Activated T-helper 2 cell treated with anti-CD3 and anti-CD28 coated beads, Interferon-gamma antibody, Interleukin-2, Interleukin-4, amounts not matched to agents 10 μg/mL and 5 μg/mL and 100 μg/mL, durations not matched to agents 14 hours and 24 hours and 36 hours (primary cell): ENCODE measurements at regions of chr10 and their contacts with region 1.

Region 1: GRCh38 chr10:26486991-26487850 is 49.1 kb downstream of the APBB1IP start:
- DNase-seq: peak; percentile 65
- H3K4me3 Mint-ChIP-seq: peak overlapping the region; percentile 76
- H3K27ac Mint-ChIP-seq: peak overlapping the region; percentile 98
- H3K4me1 Mint-ChIP-seq: peaks cover 52% of the 10 kb centered on the region
- H3K27me3 Mint-ChIP-seq: no peaks in the 10 kb centered on the region

Region 2: DNA sequence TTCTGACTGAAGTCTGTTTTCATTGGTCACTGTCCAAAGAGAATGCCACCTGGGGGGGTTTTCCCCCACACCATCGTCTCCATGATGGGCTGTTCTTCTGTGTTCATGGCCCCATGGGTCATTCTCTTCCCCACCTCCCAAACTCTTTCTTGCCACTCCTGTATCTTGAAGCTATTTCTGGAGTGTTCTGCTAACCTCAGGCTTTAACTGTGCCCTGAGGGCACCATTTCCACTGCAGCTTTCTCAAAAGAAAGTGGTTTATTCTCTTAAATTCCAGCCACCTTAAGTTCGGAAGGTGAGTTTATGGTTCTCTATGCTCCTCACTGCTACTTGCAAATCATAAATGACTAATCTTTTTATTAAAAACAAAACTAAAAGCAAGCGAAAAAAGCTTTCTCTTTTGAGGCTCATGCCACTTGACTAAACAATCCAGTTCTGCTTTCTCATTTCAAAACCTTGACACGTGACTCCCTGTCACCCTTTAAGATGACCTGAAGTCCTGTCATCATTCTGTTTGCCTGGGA is 56.5 kb before region 1 on chr10:
- intact Hi-C with region 1: loop called (anchors 1 kb)
- DNase-seq: no peak
- H3K4me3 Mint-ChIP-seq: no peak overlapping the region
- H3K27ac Mint-ChIP-seq: peak overlapping the region; percentile 86
- H3K4me1 Mint-ChIP-seq: peaks cover 15% of the 10 kb centered on the region
- H3K27me3 Mint-ChIP-seq: no peaks in the 10 kb centered on the region

Region 3: DNA sequence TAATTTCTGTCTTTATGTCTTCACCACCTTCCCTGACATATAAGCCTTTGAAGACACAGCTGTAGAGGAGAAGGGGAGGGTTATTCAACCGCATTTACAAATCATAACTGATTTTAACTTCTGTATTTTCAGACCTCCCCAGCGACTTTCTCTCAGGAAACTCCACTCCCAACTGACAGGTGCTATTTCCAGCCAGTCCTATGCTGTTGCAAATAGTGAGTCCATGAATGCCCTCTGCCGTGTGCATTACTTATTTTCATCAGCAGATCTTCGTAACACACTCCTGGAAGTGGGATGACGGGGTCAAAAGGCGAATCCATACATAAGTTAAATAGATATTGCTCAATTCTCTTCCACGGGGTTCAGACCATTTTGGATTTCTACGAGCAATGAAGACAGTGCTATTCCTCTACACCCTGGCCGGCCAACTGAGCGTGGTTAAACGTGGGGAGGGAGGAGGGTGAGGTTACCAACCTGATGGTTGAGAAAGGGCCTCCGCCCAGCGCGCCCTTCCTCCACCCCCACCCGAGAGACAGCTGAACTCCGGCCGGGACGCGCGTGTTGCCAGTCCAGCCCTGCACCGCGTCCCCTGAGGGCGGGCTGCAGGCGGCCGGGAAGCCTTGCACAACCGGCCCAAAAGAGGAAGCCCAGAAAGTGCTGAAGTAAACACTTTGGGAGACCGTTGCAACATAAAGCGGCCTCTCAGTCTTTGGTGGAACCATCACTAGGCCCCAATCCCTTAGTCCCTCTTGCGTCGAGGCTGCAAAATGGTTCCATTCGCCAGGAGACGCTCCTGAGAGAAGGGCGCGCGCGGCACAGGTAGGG is 49.4 kb before region 1 on chr10 and contains the start of gene APBB1IP:
- intact Hi-C with region 1: loop called (anchors 1 kb)
- DNase-seq: peak; percentile 52
- H3K4me3 Mint-ChIP-seq: peak within 1 kb of the TSS; percentile 92
- H3K27ac Mint-ChIP-seq: peak within 1 kb of the TSS; percentile 90
- H3K4me1 Mint-ChIP-seq: peaks cover 39% of the 10 kb centered on the region
- H3K27me3 Mint-ChIP-seq: no peaks in the 10 kb centered on the region
- total RNA-seq, gene APBB1IP: 45.2 and 47.4 TPM in 2 replicates

Region 4: DNA sequence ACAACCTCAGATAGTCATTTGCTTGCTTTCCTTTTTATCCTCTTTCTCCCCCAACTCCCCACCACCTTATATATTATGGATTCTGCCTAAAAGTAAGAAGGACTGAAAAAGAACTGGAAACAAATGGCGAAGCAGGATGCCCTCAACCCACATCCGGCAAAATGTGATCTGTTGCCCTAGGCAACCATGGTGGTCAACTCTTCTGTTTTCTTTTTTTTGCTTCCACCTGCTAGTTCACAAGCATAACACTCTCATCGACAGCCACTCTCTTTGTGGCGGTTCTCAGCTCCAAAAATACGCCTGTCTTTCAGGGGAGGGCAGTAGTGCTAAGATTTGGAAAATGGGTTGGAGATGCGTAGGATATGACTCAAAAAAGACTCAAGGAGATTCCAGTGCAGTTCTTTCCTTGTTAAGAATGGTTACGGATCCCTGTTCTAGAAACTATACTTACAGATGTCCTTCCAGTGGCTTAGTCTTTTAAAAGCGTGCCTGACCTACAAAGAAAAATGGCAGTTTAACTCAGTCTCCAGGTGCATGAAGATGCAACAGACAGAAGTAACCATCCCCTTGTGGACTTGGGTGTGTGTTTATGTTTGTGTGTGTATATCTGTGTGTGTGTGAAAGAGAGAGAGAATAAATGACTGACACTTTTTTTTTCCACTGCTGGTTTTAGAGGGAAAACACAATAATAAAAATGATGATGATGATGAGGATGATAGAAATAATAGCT is 38.4 kb before region 1 on chr10:
- intact Hi-C with region 1: loop called (anchors 1 kb)
- DNase-seq: peak; percentile 77
- H3K4me3 Mint-ChIP-seq: peak overlapping the region; percentile 55
- H3K27ac Mint-ChIP-seq: peak overlapping the region; percentile 92
- H3K4me1 Mint-ChIP-seq: peaks cover 71% of the 10 kb centered on the region
- H3K27me3 Mint-ChIP-seq: no peaks in the 10 kb centered on the region

Region 5: GRCh38 chr10:26474026-26474425 is 13.2 kb before region 1 on chr10:
- intact Hi-C with region 1: loop called (anchors 1 kb)
- DNase-seq: no peak
- H3K4me3 Mint-ChIP-seq: no peak overlapping the region
- H3K27ac Mint-ChIP-seq: no peak overlapping the region
- H3K4me1 Mint-ChIP-seq: peaks cover 69% of the 10 kb centered on the region
- H3K27me3 Mint-ChIP-seq: no peaks in the 10 kb centered on the region

Region 6: DNA sequence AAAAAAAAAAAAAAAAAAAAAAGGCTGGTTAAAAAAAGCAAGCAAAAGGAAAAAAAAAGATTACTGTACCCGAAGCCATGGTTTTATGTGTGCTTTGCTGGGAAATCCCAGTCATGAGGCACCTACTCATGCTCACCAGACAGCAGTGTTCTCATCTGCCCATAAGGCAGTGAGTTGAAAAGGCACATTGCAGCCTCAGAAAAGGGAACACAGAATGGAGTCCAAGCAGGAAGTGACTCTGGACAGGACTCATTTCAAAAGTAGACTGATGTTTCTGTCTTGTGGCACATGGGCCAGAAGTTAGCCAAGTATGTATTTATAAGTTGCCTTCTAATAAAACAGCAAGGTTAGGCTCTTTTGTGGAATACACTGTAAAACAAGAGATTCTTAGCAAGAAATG is 250.5 kb after region 1 on chr10:
- intact Hi-C with region 1: loop called (anchors 10 kb)
- DNase-seq: peak; percentile 26
- H3K4me3 Mint-ChIP-seq: no peak overlapping the region
- H3K27ac Mint-ChIP-seq: peak overlapping the region; percentile 96
- H3K4me1 Mint-ChIP-seq: peaks cover 49% of the 10 kb centered on the region
- H3K27me3 Mint-ChIP-seq: no peaks in the 10 kb centered on the region

Region 7: GRCh38 chr10:27099916-27100812 is 612.9 kb after region 1 on chr10 and contains the start of gene ANKRD26:
- intact Hi-C with region 1: loop called (anchors 10 kb)
- DNase-seq: peak; percentile 95
- H3K4me3 Mint-ChIP-seq: peak within 1 kb of the TSS; percentile 85
- H3K27ac Mint-ChIP-seq: peak within 1 kb of the TSS; percentile 91
- H3K4me1 Mint-ChIP-seq: peaks cover 34% of the 10 kb centered on the region
- H3K27me3 Mint-ChIP-seq: peaks cover 2% of the 10 kb centered on the region
- total RNA-seq, gene ANKRD26: 5.5 and 6.5 TPM in 2 replicates